Dendritic cell treated with granulocyte-macrophage colony-stimulating factor and Interleukin-4, amounts not matched to agents 40 ng/mL and 50 ng/mL, for 4 days (primary cell): ENCODE measurements at regions of chr2 and their contacts with region 1.

Region 1: GRCh38 chr2:233288719-233289118 is 18.9 kb upstream of the SAG start:
- H3K4me3 Mint-ChIP-seq: no peak overlapping the region
- H3K27ac Mint-ChIP-seq: no peak overlapping the region
- H3K4me1 Mint-ChIP-seq: no peaks in the 10 kb centered on the region
- H3K27me3 Mint-ChIP-seq: no peaks in the 10 kb centered on the region

Region 2: GRCh38 chr2:233312874-233313273 is 24.2 kb after region 1 on chr2:
- intact Hi-C with region 1: no loop called
- H3K4me3 Mint-ChIP-seq: no peak overlapping the region
- H3K27ac Mint-ChIP-seq: no peak overlapping the region
- H3K4me1 Mint-ChIP-seq: no peaks in the 10 kb centered on the region
- H3K27me3 Mint-ChIP-seq: peaks cover 3% of the 10 kb centered on the region

Region 3: GRCh38 chr2:233353769-233354499 is 65.2 kb after region 1 on chr2 and contains the start of gene DGKD:
- intact Hi-C with region 1: loop called (anchors 10 kb)
- H3K4me3 Mint-ChIP-seq: peak within 1 kb of the TSS; percentile 77
- H3K27ac Mint-ChIP-seq: peak within 1 kb of the TSS; percentile 80
- H3K4me1 Mint-ChIP-seq: peaks cover 88% of the 10 kb centered on the region
- H3K27me3 Mint-ChIP-seq: no peaks in the 10 kb centered on the region

Region 4: DNA sequence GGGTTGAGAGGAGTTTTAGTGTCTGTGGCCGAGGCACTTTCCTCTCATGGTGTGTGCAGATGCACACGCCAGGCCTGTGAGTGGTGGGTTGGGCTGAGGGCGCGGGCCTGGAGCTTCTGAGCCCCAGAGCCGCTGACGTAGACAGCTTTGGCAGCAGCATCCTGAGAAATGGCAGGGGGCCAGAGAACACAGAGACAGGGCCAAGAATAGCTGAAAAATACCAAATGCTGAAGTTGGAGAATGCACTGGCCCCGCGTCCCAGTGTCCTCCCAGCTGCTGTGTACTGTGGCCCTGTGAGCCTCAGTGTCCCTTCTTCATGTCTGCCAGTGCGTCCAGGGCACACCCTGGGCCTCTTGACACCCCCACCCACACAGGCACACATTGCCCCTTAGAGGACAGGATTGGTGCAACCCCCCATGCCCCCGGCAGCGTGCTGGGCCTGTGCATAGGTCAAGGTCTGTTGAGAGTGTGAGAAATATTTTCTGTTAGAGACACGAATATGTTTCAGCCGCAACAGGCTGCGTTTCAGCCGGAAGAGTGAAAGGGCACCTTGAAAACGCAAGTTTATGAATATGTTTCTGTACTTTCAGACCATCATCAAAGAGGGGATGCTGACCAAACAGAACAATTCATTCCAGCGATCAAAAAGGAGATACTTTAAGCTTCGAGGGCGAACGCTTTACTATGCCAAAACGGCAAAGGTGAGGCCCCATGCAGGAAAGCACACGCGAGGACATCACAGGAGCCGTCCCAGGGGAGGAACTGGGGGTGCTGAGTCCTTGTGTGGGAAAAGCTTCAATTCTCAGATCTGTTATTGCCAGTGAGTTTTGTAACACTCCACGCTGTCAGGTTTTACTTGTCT is 99.2 kb after region 1 on chr2:
- intact Hi-C with region 1: loop called (anchors 10 kb)
- H3K4me3 Mint-ChIP-seq: no peak overlapping the region
- H3K27ac Mint-ChIP-seq: no peak overlapping the region
- H3K4me1 Mint-ChIP-seq: peaks cover 33% of the 10 kb centered on the region
- H3K27me3 Mint-ChIP-seq: no peaks in the 10 kb centered on the region

Region 5: GRCh38 chr2:233542507-233542906 is 253.8 kb after region 1 on chr2:
- intact Hi-C with region 1: no loop called
- H3K4me3 Mint-ChIP-seq: no peak overlapping the region
- H3K27ac Mint-ChIP-seq: no peak overlapping the region
- H3K4me1 Mint-ChIP-seq: no peaks in the 10 kb centered on the region
- H3K27me3 Mint-ChIP-seq: no peaks in the 10 kb centered on the region

Region 6: DNA sequence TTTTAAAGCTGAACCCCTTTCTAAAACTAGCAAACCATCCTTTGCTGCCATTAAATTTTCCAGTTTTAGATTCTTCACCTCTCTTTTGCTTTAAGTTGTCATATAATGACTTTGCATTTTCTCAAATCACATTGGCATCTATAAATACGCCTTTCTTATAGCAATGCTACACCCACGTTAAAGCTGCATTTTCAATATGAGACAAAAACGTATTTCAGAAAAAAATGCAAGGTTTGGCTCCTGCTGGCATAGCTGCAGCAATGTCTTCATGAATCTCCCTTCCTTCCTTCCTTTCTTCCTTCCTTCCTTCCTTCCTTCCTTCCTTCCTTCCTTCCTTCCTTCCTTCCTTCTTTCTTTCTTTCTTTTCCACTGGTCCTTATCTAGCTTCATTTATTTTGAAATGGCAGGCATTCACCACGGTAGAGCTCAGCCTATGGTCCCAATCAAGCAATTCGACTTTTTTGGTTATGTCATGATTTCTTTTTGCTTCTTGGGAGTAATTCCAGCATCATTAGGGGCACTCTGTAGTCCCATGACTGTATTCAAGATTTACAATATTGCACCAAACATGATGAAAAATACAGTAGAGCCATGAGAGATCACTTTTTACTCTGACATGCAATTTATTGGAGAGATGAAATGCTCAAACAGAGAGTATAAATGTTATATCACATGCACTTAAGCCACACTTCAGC is 338.8 kb after region 1 on chr2:
- intact Hi-C with region 1: no loop called
- H3K4me3 Mint-ChIP-seq: no peak overlapping the region
- H3K27ac Mint-ChIP-seq: no peak overlapping the region
- H3K4me1 Mint-ChIP-seq: no peaks in the 10 kb centered on the region
- H3K27me3 Mint-ChIP-seq: no peaks in the 10 kb centered on the region